ENCODE measurements at regions of chr9 and their contacts with region 1.

Region 1: DNA sequence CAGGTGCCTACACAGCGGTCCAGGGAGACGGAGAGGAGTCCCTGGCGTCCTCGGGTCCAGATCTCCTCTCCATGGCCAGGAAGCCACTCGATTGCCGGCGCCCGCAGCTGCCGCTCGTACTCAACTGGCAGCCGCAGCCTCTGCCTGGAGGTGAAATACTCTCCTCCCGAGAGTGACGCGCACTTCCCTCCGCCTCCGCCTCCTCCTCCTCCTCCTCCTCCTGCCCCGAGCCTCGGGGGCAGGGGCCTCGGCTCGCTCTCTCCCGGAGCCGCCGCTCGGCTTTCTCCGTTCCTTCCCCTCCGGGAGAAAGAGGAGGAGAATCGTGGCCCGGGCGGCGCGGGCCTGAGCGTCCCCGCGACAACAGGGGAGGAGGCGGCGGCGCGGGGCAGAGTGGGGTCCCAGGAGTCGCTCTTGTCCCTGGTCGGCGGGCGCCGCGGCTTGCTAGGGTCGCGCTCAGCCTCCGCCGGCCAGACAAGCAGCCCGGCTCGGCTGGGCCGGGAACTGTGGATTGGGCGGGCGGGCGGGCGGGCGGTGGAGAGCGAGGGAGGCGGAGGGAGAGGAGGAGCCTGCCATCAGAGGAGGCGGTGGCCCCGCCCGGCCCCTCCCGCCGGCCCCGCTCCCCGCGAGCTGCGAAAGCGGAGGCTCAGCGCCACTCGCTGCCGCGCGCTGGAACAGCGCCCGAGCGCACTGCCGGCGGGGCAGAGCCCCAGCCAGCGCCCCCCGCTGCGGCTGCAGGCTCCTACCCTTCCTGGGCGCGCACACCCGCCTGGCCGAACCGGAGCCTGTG is at the start of gene CEMIP2:
- DNase-seq: peak; percentile 94 to 96
- ATAC-seq: peak; percentile 94
- H3K4me3 ChIP-seq: peak within 1 kb of the TSS; percentile 77 to 81
- H3K27ac ChIP-seq: peak within 1 kb of the TSS; percentile 68 to 89
- H3K4me1 ChIP-seq: peaks cover 0 to 2% of the 10 kb centered on the region in 2 donors
- H3K27me3 ChIP-seq: no peaks in the 10 kb centered on the region
- total RNA-seq, gene CEMIP2: 101 to 122 TPM

Region 2: DNA sequence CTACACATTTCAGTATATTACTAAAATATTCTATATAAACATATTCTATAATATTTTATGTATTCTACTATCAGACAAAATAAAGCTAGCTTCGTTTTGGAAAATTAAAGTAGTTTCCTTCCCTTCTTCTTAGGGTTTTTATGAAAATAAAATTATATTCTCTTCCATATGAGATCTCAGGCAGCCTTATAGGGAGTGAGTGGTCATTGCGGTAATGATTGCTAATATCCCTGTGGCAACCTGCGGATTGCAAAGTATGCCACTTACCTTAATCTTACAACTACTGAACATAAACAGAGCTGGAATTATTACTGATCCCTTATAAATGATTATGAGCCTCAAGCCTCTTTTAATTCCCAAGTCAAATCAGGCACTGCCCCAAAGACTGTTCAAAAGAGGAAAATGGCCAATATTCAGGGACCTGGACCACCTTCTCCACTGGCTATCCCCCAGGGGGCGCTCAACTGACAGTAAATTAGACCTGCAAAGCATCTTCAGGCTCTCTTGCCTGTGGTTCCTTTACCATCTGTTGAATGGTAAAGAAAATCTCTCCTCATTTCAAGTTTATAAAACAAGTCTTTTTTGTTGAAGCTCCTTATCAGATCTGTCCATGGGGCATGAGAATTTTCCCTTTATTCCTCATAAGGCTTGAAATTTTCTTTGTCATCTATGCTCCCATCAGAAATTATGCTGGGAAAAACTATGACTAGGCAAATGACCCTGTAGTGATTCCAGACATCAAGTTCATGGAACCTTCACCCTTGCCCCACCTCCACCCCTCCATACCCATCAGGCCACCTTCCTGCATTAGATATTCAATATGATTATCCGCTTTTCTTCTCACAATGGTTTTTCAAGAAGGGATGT is 164.2 kb before region 1 on chr9:
- intact Hi-C with region 1: loop called in 1 of 2 experiments (anchors 10 kb)
- DNase-seq: peak; percentile 81 to 86
- ATAC-seq: peak; percentile 74
- H3K4me3 ChIP-seq: no peak overlapping the region
- H3K27ac ChIP-seq: no peak overlapping the region
- H3K4me1 ChIP-seq: peaks cover 0 to 2% of the 10 kb centered on the region in 2 donors
- H3K27me3 ChIP-seq: no peaks in the 10 kb centered on the region

Region 3: GRCh38 chr9:71703172-71703872 is 65.3 kb before region 1 on chr9:
- intact Hi-C with region 1: loop called in 1 of 2 experiments (anchors 10 kb)
- DNase-seq: no peak
- ATAC-seq: peak; percentile 62
- H3K4me3 ChIP-seq: no peak overlapping the region
- H3K27ac ChIP-seq: no peak overlapping the region
- H3K4me1 ChIP-seq: peaks cover 0 to 5% of the 10 kb centered on the region in 2 donors
- H3K27me3 ChIP-seq: no peaks in the 10 kb centered on the region

Region 4: DNA sequence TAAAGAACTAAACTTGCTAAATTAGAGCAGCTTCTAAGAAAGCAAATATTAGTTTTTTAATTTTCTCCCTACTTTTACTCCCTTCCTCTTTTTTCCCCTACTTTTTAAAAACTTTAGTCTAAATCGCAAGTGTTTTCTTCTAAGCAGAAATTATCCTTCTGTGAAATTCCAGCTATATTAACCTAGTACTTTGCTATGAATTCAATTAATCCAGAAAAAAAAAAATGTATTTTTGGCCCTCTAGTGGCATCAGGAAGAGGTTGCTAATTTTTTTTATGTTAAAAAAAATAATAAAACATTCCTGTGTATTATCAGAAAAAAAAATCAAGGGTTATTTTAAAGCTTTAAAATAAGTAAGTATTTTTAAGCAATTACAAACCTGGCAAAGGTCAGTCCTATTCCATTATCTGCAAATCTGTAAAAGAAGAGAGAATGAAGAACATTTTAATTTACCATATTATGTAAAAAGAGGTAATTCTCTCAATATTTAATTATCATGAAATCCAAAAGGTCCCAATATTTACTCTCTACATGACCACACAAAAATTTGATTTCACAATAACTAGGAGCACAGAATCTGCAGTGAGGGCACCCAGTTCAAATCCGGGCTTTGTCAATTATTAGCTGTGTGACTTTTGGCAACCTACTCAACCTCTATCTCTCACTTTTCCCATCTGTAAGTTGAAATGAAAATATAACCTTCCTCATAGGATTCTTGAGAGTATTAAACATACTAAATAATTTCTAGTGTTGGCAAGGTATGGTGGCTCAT is 52.3 kb before region 1 on chr9:
- intact Hi-C with region 1: no loop called
- DNase-seq: no peak
- ATAC-seq: no peak
- H3K4me3 ChIP-seq: no peak overlapping the region
- H3K27ac ChIP-seq: no peak overlapping the region
- H3K4me1 ChIP-seq: no peaks in the 10 kb centered on the region
- H3K27me3 ChIP-seq: no peaks in the 10 kb centered on the region

Region 5: GRCh38 chr9:71830929-71831328 is 62.3 kb after region 1 on chr9:
- intact Hi-C with region 1: no loop called
- DNase-seq: no peak
- ATAC-seq: no peak
- H3K4me3 ChIP-seq: no peak overlapping the region
- H3K27ac ChIP-seq: no peak overlapping the region
- H3K4me1 ChIP-seq: no peaks in the 10 kb centered on the region
- H3K27me3 ChIP-seq: no peaks in the 10 kb centered on the region

Region 6: GRCh38 chr9:71916834-71917534 is 148.4 kb after region 1 on chr9:
- intact Hi-C with region 1: no loop called
- DNase-seq: no peak
- ATAC-seq: no peak
- H3K4me3 ChIP-seq: no peak overlapping the region
- H3K27ac ChIP-seq: no peak overlapping the region
- H3K4me1 ChIP-seq: peaks cover 3 to 7% of the 10 kb centered on the region in 2 donors
- H3K27me3 ChIP-seq: no peaks in the 10 kb centered on the region

Region 7: GRCh38 chr9:72356041-72356582 is 587.5 kb after region 1 on chr9:
- intact Hi-C with region 1: loop called in 1 of 2 experiments (anchors 10 kb)
- DNase-seq: no peak
- ATAC-seq: no peak
- H3K4me3 ChIP-seq: no peak overlapping the region
- H3K27ac ChIP-seq: peak overlapping the region in 1 of 2 donors; percentile 33
- H3K4me1 ChIP-seq: peaks cover 0 to 9% of the 10 kb centered on the region in 2 donors
- H3K27me3 ChIP-seq: no peaks in the 10 kb centered on the region

Measured in aorta (tissue), 5 donors.